Activated CD4-positive, alpha-beta T cell treated with anti-CD3 and anti-CD28 coated beads for 36 hours (primary cell): ENCODE measurements at regions of chr3 and their contacts with region 1.

Region 1: DNA sequence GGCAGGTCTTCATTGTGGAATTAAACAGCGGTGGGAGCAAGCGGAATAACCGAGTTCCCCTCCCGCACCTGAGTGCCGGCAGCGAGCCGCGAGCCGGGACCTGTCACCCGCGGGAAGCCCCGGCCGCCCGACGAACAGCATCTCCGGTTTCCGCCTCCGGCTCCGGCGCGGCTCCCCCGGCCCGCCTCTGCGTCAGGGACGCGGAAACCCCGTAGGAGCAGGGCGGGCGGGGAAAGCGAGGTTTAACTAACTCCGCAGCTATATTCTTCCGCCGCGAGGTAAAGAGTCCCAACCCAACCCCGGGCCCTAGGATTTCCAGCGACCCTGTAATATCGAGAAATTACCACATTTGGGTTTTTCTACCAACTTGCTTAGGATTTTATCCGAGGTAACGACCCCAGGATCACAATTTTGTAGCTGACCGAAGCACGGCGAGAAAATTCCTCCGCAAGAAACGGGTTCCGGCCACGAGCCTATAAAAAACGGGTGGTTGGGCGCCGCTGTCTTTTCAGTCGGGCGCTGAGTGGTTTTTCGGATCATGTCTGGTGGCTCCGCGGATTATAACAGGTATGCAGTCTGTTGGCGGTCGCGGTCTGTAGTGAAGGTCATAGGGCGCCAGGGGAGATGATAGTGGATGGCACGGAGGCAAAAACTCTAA is at the start of gene EIF4A2:
- DNase-seq: peak; percentile 95
- ATAC-seq: peak; percentile 69
- H3K4me3 Mint-ChIP-seq: peak within 1 kb of the TSS; percentile 100
- H3K27ac Mint-ChIP-seq: peak within 1 kb of the TSS; percentile 100
- H3K4me1 Mint-ChIP-seq: peaks cover 32% of the 10 kb centered on the region
- H3K27me3 Mint-ChIP-seq: no peaks in the 10 kb centered on the region
- total RNA-seq, gene EIF4A2: 291 to 390 TPM

Region 2: GRCh38 chr3:185572183-185572582 is 1211.0 kb before region 1 on chr3:
- CTCF ChIA-PET with region 1: no interaction called
- POLR2A ChIA-PET with region 1: no interaction called
- intact Hi-C with region 1: no loop called
- DNase-seq: no peak
- ATAC-seq: no peak
- H3K4me3 Mint-ChIP-seq: no peak overlapping the region
- H3K27ac Mint-ChIP-seq: no peak overlapping the region
- H3K4me1 Mint-ChIP-seq: peaks cover 6% of the 10 kb centered on the region
- H3K27me3 Mint-ChIP-seq: no peaks in the 10 kb centered on the region

Region 3: DNA sequence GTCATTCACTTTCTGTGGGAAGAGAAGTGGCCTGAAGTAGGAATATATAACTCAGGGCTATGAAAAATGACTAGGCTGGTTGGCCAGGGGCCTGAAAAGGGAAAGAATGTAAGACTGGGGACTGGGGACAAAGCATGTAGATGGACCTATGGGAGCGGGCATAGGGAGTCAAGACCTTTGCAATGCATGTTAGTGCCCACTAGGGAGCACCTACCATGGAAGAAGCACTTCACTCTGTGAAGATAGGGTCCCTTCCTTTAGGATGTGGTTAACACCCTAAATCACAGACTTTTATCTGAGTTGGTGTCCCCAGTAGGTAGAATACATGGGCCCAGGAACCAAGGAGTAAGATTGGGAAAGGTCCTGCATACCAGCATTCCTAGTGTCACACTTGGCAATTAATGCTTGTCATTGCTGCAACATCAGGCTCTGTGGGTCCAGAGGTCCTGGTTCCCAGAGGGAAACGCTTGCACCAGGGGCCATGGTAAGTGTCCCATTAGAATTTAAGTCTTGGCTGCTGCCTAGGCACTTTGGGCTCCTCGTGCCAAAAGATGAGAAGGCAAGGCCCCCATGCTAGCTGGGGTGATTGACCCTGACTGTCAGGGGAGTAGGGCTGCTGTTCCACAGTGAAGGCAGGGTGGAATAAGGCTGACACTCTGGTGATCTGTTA is 318.6 kb before region 1 on chr3:
- CTCF ChIA-PET with region 1: no interaction called
- POLR2A ChIA-PET with region 1: no interaction called
- intact Hi-C with region 1: no loop called
- DNase-seq: no peak
- ATAC-seq: no peak
- H3K4me3 Mint-ChIP-seq: no peak overlapping the region
- H3K27ac Mint-ChIP-seq: no peak overlapping the region
- H3K4me1 Mint-ChIP-seq: peaks cover 6% of the 10 kb centered on the region
- H3K27me3 Mint-ChIP-seq: peaks cover 3% of the 10 kb centered on the region

Region 4: DNA sequence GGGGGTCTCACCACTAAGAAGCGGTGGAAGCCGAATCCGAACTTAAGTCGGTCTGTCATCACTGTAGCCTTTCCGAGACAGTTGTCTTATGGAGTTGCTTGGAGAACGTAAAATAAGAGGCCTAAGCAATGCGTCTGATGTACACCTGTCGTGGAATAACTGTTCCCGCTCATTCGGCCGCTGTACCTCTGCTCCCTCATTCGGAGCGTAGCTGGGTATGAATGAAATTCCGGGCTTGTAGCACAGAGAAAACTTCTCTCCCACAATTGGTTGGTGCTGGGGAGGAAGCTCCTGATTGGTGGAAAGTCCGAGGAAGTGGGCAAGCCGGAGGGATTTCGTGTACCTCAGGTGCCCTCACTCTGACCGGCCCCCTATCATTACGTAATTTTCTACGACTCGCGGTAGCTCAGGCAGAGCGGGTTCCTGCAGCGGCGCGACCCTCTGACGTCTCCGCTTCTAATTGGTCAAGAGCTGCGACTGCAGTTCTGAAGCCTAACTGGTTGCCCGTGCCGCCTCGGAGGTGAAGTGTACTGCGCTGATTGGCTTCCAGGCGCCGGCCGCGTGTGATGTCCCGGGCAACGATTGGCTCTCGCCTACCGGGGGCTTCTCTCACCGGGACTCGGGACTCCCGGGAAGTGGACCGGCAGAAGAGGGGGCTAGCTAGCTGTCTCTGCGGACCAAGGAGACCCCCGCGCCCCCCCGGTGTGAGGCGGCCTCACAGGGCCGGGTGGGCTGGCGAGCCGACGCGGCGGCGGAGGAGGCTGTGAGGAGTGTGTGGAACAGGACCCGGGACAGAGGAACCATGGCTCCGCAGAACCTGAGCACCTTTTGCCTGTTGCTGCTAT is 212.9 kb before region 1 on chr3 and contains the start of gene DNAJB11:
- CTCF ChIA-PET with region 1: no interaction called
- POLR2A ChIA-PET with region 1: interaction called, 36 read pairs
- intact Hi-C with region 1: loop called (anchors 1 to 2 kb)
- DNase-seq: peak; percentile 100
- ATAC-seq: peak; percentile 92
- H3K4me3 Mint-ChIP-seq: peak within 1 kb of the TSS; percentile 93
- H3K27ac Mint-ChIP-seq: peak within 1 kb of the TSS; percentile 95
- H3K4me1 Mint-ChIP-seq: peaks cover 50% of the 10 kb centered on the region
- H3K27me3 Mint-ChIP-seq: no peaks in the 10 kb centered on the region
- total RNA-seq, gene DNAJB11: 30.9 to 36.6 TPM

Region 5: GRCh38 chr3:186700267-186700666 is 82.9 kb before region 1 on chr3:
- CTCF ChIA-PET with region 1: no interaction called
- POLR2A ChIA-PET with region 1: no interaction called
- intact Hi-C with region 1: no loop called
- DNase-seq: no peak
- ATAC-seq: peak; percentile 30
- H3K4me3 Mint-ChIP-seq: no peak overlapping the region
- H3K27ac Mint-ChIP-seq: no peak overlapping the region
- H3K4me1 Mint-ChIP-seq: peaks cover 2% of the 10 kb centered on the region
- H3K27me3 Mint-ChIP-seq: peaks cover 12% of the 10 kb centered on the region

Region 6: DNA sequence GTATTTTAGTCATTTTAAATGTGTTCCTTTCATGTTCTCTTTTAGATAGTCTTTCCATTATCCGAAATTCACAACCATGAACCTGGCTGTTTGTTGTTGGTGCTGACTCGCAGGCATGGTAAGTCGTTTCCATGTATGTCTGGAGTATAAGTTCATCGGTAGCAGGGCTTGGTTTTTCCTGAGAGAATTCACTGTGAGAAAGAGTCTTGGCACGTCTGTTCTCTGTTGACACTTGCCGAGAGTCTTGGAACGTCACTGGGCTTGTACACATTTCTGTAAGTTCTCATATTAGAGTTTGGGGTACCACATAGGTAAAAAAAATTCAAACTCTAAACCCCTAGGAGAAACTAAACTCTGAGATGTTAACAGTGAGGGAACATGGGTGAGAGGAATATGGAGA is 29.2 kb before region 1 on chr3:
- CTCF ChIA-PET with region 1: no interaction called
- POLR2A ChIA-PET with region 1: interaction called, 8 read pairs
- intact Hi-C with region 1: loop called in 1 of 2 experiments (anchors 2 kb)
- DNase-seq: no peak
- ATAC-seq: no peak
- H3K4me3 Mint-ChIP-seq: no peak overlapping the region
- H3K27ac Mint-ChIP-seq: no peak overlapping the region
- H3K4me1 Mint-ChIP-seq: peaks cover 13% of the 10 kb centered on the region
- H3K27me3 Mint-ChIP-seq: peaks cover 4% of the 10 kb centered on the region

Region 7: DNA sequence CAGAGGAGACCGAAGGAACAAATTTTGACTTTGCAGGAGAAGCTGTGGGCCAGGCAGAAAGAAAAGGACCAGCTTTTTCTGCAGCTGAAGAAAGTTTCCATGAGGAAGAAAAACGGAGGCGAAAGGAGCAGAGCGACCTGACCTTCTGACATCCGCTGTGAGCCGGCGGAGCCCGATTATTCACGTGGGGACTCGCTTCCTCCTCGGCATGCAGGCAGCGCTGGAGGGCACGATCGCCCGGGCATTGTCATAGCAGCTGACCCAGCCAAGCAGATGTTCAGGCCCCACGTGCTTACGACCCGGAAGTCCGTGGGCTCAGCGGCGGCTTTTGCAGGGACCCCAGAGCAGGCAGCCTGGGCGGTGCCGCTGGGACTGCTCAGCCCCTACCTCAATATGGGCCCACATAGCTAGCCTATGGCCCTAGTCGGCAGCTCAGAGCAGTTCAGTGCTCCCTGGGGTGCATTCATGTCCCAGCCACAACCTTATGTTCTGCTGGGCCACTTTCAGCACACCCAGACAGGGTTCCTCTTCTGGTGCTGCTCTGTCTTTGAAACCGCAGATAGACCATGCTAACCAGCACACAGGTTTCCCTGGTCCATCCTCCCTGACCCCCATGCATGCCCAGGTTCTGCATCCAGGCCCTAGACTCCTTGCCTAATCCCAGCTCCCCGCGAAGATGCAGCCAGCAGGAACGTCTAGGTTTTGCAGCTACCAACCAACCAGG is 10.3 kb before region 1 on chr3:
- CTCF ChIA-PET with region 1: interaction called, 4 read pairs
- POLR2A ChIA-PET with region 1: interaction called, 10 read pairs
- intact Hi-C with region 1: loop called in 1 of 2 experiments (anchors 1 kb)
- DNase-seq: peak; percentile 84
- ATAC-seq: peak; percentile 93
- H3K4me3 Mint-ChIP-seq: peak overlapping the region; percentile 86
- H3K27ac Mint-ChIP-seq: peak overlapping the region; percentile 98
- H3K4me1 Mint-ChIP-seq: peaks cover 16% of the 10 kb centered on the region
- H3K27me3 Mint-ChIP-seq: no peaks in the 10 kb centered on the region

Region 8: GRCh38 chr3:186826976-186827731 is 44.0 kb after region 1 on chr3:
- CTCF ChIA-PET with region 1: no interaction called
- POLR2A ChIA-PET with region 1: interaction called, 7 read pairs
- intact Hi-C with region 1: loop called (anchors 2 to 5 kb)
- DNase-seq: peak; percentile 91
- ATAC-seq: peak; percentile 83
- H3K4me3 Mint-ChIP-seq: peak overlapping the region; percentile 82
- H3K27ac Mint-ChIP-seq: no peak overlapping the region
- H3K4me1 Mint-ChIP-seq: peaks cover 23% of the 10 kb centered on the region
- H3K27me3 Mint-ChIP-seq: peaks cover 31% of the 10 kb centered on the region

Region 9: GRCh38 chr3:187183210-187183862 is 400.1 kb after region 1 on chr3:
- CTCF ChIA-PET with region 1: no interaction called
- POLR2A ChIA-PET with region 1: no interaction called
- intact Hi-C with region 1: no loop called
- DNase-seq: no peak
- ATAC-seq: no peak
- H3K4me3 Mint-ChIP-seq: no peak overlapping the region
- H3K27ac Mint-ChIP-seq: no peak overlapping the region
- H3K4me1 Mint-ChIP-seq: no peaks in the 10 kb centered on the region
- H3K27me3 Mint-ChIP-seq: peaks cover 8% of the 10 kb centered on the region